CD4-positive, alpha-beta T cell (primary cell): ENCODE measurements at regions of chr10 and their contacts with region 1.

Region 1: GRCh38 chr10:119859420-119860258 is 13.0 kb downstream of the MCMBP start:
- DNase-seq: peak in 3 of 14 experiments; percentile 65 to 73 (median 72)
- ATAC-seq: peak; percentile 60
- H3K4me3 ChIP-seq: no peak overlapping the region
- H3K4me3 Mint-ChIP-seq: no peak overlapping the region
- H3K27ac ChIP-seq: no peak overlapping the region
- H3K27ac Mint-ChIP-seq: peak overlapping the region; percentile 4
- H3K4me1 ChIP-seq: peaks cover 4% of the 10 kb centered on the region
- H3K4me1 Mint-ChIP-seq: peaks cover 46% of the 10 kb centered on the region
- H3K27me3 ChIP-seq: no peaks in the 10 kb centered on the region
- H3K27me3 Mint-ChIP-seq: no peaks in the 10 kb centered on the region
- CTCF ChIP-seq: peak; percentile 88

Region 2: DNA sequence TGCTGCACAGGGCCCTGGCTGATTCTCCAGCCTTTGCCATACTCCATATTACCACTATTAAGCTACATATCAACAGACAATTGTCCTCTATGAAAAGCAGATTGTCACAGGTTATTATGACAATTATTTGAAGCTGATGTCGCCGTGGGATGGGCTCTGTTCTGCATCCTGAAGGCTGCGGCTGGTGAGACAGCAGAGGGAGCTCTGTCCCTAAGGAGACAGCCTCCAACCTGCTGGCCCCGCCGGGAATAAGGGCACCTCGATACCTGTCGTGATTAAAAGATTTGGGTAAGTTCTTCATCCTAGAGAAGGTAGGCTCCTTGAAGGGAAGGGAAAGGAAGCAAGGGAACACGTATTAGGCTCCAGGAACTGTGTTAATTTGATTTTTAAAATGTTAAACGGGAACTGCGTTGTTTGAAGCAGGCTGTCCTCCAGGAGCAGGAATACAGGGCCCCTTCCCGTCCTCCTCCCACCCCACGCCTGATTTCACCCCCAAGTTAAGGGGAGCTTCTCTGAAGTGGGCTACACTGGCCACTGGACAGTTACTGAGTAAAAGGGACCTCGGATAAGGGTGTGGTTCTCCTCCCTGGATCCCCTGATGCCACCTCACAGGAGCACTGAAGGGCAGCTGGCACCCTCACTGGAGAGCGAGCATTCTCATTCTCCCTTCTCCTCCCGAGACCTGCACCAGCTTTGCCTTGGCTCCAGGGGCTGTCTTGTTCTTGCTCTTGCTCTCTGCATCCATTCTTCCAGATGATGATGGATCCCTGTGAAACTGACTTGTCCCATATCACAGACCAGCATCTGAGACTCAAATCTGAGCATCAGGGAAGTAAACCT is 251.1 kb before region 1 on chr10:
- CTCF ChIA-PET with region 1: interaction called, 5 read pairs
- POLR2A ChIA-PET with region 1: no interaction called
- intact Hi-C with region 1: loop called in 1 of 2 experiments (anchors 1 kb)
- DNase-seq: peak in 12 of 14 experiments; percentile 11 to 66 (median 34)
- ATAC-seq: peak; percentile 63
- H3K4me3 ChIP-seq: no peak overlapping the region
- H3K4me3 Mint-ChIP-seq: no peak overlapping the region
- H3K27ac ChIP-seq: no peak overlapping the region
- H3K27ac Mint-ChIP-seq: no peak overlapping the region
- H3K4me1 ChIP-seq: peaks cover 6% of the 10 kb centered on the region
- H3K4me1 Mint-ChIP-seq: no peaks in the 10 kb centered on the region
- H3K27me3 ChIP-seq: no peaks in the 10 kb centered on the region
- H3K27me3 Mint-ChIP-seq: no peaks in the 10 kb centered on the region
- CTCF ChIP-seq: peak; percentile 54

Region 3: GRCh38 chr10:119834188-119834587 is 25.5 kb before region 1 on chr10:
- CTCF ChIA-PET with region 1: no interaction called
- POLR2A ChIA-PET with region 1: no interaction called
- intact Hi-C with region 1: no loop called
- DNase-seq: no peak
- ATAC-seq: no peak
- H3K4me3 ChIP-seq: no peak overlapping the region
- H3K4me3 Mint-ChIP-seq: no peak overlapping the region
- H3K27ac ChIP-seq: no peak overlapping the region
- H3K27ac Mint-ChIP-seq: peak overlapping the region; percentile 55
- H3K4me1 ChIP-seq: no peaks in the 10 kb centered on the region
- H3K4me1 Mint-ChIP-seq: peaks cover 6% of the 10 kb centered on the region
- H3K27me3 ChIP-seq: no peaks in the 10 kb centered on the region
- H3K27me3 Mint-ChIP-seq: no peaks in the 10 kb centered on the region
- CTCF ChIP-seq: no peak